ENCODE measurements at regions of chr1 and their contacts with region 1.

Region 1: DNA sequence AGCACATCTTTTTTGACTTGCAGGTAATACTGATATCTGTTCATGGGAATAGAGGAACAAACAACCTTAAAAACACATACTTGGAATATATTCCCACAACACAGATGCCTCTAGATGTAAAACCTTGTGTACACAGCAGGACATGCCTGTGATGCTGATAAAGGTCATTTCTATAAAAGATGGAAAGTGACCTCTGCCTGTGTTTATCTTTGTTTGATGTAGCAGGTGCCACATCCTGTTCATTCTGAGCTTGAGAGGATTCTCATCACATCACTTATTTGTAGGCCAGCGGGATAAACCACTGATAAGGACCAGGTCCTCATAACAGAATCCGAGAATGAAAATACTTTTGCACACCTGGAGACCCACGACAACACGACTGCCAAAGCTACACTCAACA is 133.7 kb downstream of the SMYD2 start:
- DNase-seq: peak; percentile 76 to 77
- H3K4me3 ChIP-seq: no peak overlapping the region
- H3K4me3 Mint-ChIP-seq: peak overlapping the region; percentile 34
- H3K27ac Mint-ChIP-seq: peak overlapping the region; percentile 75
- H3K4me1 ChIP-seq: peaks cover 51% of the 10 kb centered on the region
- H3K4me1 Mint-ChIP-seq: peaks cover 34% of the 10 kb centered on the region
- H3K27me3 ChIP-seq: no peaks in the 10 kb centered on the region
- H3K27me3 Mint-ChIP-seq: no peaks in the 10 kb centered on the region
- CTCF ChIP-seq: no peak

Region 2: GRCh38 chr1:214349781-214350180 is 64.9 kb before region 1 on chr1:
- CTCF ChIA-PET with region 1: no interaction called
- POLR2A ChIA-PET with region 1: interaction called, 5 read pairs
- intact Hi-C with region 1: loop called (anchors 1 kb)
- DNase-seq: peak; percentile 82 to 88
- H3K4me3 ChIP-seq: no peak overlapping the region
- H3K4me3 Mint-ChIP-seq: peak overlapping the region; percentile 70
- H3K27ac Mint-ChIP-seq: peak overlapping the region; percentile 97
- H3K4me1 ChIP-seq: peaks cover 46% of the 10 kb centered on the region
- H3K4me1 Mint-ChIP-seq: peaks cover 33% of the 10 kb centered on the region
- H3K27me3 ChIP-seq: no peaks in the 10 kb centered on the region
- H3K27me3 Mint-ChIP-seq: no peaks in the 10 kb centered on the region
- CTCF ChIP-seq: no peak

Region 3: GRCh38 chr1:214404154-214404553 is 10.5 kb before region 1 on chr1:
- CTCF ChIA-PET with region 1: interaction called, 4 read pairs
- POLR2A ChIA-PET with region 1: interaction called, 3 read pairs
- intact Hi-C with region 1: loop called (anchors 1 kb)
- DNase-seq: no peak
- H3K4me3 ChIP-seq: no peak overlapping the region
- H3K4me3 Mint-ChIP-seq: peak overlapping the region; percentile 10
- H3K27ac Mint-ChIP-seq: peak overlapping the region; percentile 36
- H3K4me1 ChIP-seq: peaks cover 33% of the 10 kb centered on the region
- H3K4me1 Mint-ChIP-seq: peaks cover 15% of the 10 kb centered on the region
- H3K27me3 ChIP-seq: no peaks in the 10 kb centered on the region
- H3K27me3 Mint-ChIP-seq: no peaks in the 10 kb centered on the region
- CTCF ChIP-seq: no peak

Region 4: GRCh38 chr1:214446772-214447556 is 32.3 kb after region 1 on chr1:
- CTCF ChIA-PET with region 1: no interaction called
- POLR2A ChIA-PET with region 1: no interaction called
- intact Hi-C with region 1: loop called (anchors 1 kb)
- DNase-seq: peak; percentile 87 to 89
- H3K4me3 ChIP-seq: peak overlapping the region; percentile 23
- H3K4me3 Mint-ChIP-seq: peak overlapping the region; percentile 65
- H3K27ac Mint-ChIP-seq: peak overlapping the region; percentile 91
- H3K4me1 ChIP-seq: peaks cover 58% of the 10 kb centered on the region
- H3K4me1 Mint-ChIP-seq: peaks cover 44% of the 10 kb centered on the region
- H3K27me3 ChIP-seq: no peaks in the 10 kb centered on the region
- H3K27me3 Mint-ChIP-seq: no peaks in the 10 kb centered on the region
- CTCF ChIP-seq: no peak

Region 5: GRCh38 chr1:214506972-214507482 is 92.3 kb after region 1 on chr1:
- CTCF ChIA-PET with region 1: no interaction called
- POLR2A ChIA-PET with region 1: interaction called, 18 read pairs
- intact Hi-C with region 1: loop called (anchors 1 kb)
- DNase-seq: peak; percentile 97
- H3K4me3 ChIP-seq: peak overlapping the region; percentile 34
- H3K4me3 Mint-ChIP-seq: peak overlapping the region; percentile 65
- H3K27ac Mint-ChIP-seq: peak overlapping the region; percentile 92
- H3K4me1 ChIP-seq: peaks cover 59% of the 10 kb centered on the region
- H3K4me1 Mint-ChIP-seq: peaks cover 47% of the 10 kb centered on the region
- H3K27me3 ChIP-seq: no peaks in the 10 kb centered on the region
- H3K27me3 Mint-ChIP-seq: no peaks in the 10 kb centered on the region
- CTCF ChIP-seq: no peak

Measured in Caco-2 (cell line).